Lower leg skin (tissue), 4 donors: ENCODE measurements at regions of chr4 and their contacts with region 1.

Region 1: DNA sequence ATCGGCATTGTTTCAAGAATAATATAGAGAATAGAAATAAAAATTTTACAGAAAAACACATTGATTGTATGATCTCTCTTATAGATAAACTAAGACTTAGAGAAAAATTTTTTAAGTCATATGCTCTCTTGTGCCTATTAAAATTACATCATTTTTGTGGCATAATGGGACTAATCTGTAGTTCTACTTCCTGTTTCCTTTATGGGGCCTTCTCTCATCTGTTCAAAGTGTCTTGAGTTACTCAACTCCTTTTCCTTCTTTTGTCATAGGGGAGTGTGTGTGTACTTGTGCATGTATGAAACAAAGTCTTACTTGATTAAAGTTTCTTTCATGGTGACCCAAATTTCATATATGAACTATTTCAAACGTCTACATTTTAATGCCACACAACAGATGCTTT is 1448.9 kb upstream of the TENM3 start:
- DNase-seq: no peak
- H3K4me3 ChIP-seq: no peak overlapping the region
- CTCF ChIP-seq: no peak
- POLR2A ChIP-seq: no peak

Region 2: DNA sequence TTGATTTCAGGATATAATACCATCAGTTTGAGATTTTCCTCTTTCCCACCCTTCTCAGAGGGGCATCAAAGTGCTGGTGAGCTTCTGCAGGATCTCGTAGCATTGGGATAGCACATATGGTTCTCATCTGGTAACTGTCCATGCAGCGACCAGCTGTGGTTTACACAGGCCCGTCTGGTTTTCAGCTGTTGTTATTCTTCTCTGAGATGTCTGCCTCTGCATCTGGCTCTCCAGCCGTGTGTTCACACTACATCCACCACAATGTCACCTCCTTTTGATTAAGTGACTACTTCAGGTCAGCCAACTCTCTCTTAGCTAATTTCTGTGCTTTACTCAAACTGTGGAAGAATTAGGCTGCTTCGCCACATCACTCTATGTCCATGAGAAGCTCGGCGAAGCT is 772.2 kb after region 1 on chr4:
- intact Hi-C with region 1: no loop called
- DNase-seq: no peak
- H3K4me3 ChIP-seq: no peak overlapping the region
- CTCF ChIP-seq: no peak
- POLR2A ChIP-seq: no peak

Region 3: DNA sequence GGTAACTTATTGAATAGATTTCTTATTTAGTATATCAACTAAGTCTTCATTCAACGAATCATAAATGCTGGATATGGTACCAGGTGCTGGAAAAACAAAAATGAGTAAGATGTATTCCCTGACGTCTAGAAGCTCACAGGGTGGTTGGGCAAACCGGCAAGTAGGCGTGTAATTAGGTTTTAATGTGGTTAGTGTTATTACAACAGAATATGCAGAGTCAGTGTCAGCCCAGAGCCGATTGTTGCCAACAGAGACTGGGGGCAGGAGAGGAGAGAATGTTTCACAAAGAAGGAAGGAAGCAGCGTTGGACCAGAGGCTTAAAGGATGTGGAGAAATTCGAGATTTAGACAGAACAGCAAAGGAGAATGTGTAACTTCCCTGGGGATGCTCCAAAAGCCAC is 1560.5 kb after region 1 on chr4:
- intact Hi-C with region 1: loop called (anchors 10 kb)
- DNase-seq: no peak
- H3K4me3 ChIP-seq: no peak overlapping the region
- CTCF ChIP-seq: no peak
- POLR2A ChIP-seq: no peak